Mammary epithelial cell (primary cell): ENCODE measurements at regions of chr9 and their contacts with region 1.

Region 1: DNA sequence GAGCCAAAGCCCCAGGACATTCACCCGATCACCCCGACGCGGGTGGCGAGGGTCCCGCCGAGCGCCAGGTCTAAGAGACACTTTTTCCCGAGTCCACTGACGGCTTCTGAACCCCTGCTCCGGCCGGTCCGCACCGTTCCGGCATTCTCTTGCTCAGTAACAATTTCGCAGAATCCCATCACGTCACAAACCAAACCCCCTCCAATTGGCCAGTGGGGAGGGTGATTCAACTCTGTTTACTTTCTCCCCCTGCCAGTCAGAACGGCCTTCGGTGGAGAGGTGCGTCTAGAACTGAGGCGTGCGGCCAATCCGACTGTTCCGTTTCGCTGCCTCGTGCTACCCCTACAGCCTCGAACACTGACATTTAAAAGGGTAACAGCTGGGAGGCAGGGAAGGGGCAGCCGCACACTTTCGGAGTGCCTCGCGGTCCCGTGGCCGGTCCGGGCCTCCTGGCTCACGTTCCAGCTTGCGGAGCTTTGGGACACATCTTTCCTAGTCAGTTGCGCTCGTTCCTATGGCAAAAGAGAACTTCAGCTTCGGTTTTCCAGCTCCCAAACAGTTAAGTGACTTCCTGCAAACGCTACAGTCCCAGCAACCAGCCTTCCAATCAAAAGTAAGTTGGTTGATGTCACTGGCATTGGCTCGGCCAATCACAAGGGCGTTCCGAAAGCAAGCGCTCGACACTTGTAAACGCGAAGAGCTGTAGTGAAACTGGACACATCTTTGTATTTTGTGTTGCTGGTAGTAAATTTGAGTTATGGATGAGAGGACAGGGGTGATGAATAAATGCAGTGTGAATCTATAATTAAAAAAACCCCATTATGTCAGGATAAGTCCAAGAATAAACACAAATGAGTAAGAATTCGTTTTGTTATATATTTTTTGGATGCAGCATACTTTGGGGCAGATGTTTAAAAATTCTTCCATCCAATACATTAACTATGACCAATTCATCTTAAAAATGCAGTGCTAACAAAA is at the start of gene KLF9:
- DNase-seq: peak; percentile 97
- H3K4me3 ChIP-seq: peak within 1 kb of the TSS; percentile 53 to 94 (median 78)
- H3K27ac ChIP-seq: peak within 1 kb of the TSS; percentile 89
- H3K4me1 ChIP-seq: peaks cover 29% of the 10 kb centered on the region
- H3K27me3 ChIP-seq: no peaks in the 10 kb centered on the region
- CTCF ChIP-seq: no peak
- total RNA-seq, gene KLF9: 5.5 to 10.8 TPM

Region 2: DNA sequence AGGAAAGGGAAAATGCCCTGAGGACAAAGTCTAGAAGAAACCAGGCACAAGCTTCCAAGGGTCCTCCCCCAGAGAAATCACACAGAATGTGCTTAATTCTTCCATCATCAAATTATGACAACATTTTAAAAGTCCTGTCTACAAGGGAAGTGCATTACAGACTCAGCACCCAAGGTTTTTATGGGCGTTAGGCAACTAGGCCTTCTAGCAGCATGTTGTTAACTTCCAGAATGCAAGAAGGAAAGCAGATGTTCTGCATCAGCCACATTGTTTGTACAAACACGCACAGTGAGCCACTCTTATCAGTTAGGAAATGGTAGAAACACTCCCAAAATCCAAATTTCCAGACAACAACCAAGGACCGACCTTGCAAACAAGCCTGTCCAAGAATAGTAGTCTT is 128.8 kb before region 1 on chr9:
- CTCF ChIA-PET with region 1: no interaction called
- dilution Hi-C with region 1: no loop called
- in situ Hi-C with region 1: no loop called
- intact Hi-C with region 1: loop called (anchors 10 kb)
- DNase-seq: no peak
- H3K4me3 ChIP-seq: no peak overlapping the region
- H3K27ac ChIP-seq: no peak overlapping the region
- H3K4me1 ChIP-seq: no peaks in the 10 kb centered on the region
- H3K27me3 ChIP-seq: no peaks in the 10 kb centered on the region
- CTCF ChIP-seq: no peak

Region 3: GRCh38 chr9:70362952-70363351 is 51.1 kb before region 1 on chr9:
- CTCF ChIA-PET with region 1: no interaction called
- dilution Hi-C with region 1: no loop called
- in situ Hi-C with region 1: no loop called
- intact Hi-C with region 1: no loop called
- DNase-seq: peak; percentile 17
- H3K4me3 ChIP-seq: no peak overlapping the region
- H3K27ac ChIP-seq: no peak overlapping the region
- H3K4me1 ChIP-seq: no peaks in the 10 kb centered on the region
- H3K27me3 ChIP-seq: no peaks in the 10 kb centered on the region
- CTCF ChIP-seq: no peak

Region 4: GRCh38 chr9:70484210-70485130 is 70.4 kb after region 1 on chr9:
- CTCF ChIA-PET with region 1: interaction called, 4 read pairs
- dilution Hi-C with region 1: no loop called
- in situ Hi-C with region 1: no loop called
- intact Hi-C with region 1: loop called (anchors 1 kb)
- DNase-seq: peak; percentile 82
- H3K4me3 ChIP-seq: no peak overlapping the region
- H3K27ac ChIP-seq: peak overlapping the region; percentile 44
- H3K4me1 ChIP-seq: peaks cover 32% of the 10 kb centered on the region
- H3K27me3 ChIP-seq: no peaks in the 10 kb centered on the region
- CTCF ChIP-seq: peak; percentile 65 to 71

Region 5: GRCh38 chr9:70835323-70835722 is 421.2 kb after region 1 on chr9:
- CTCF ChIA-PET with region 1: no interaction called
- dilution Hi-C with region 1: no loop called
- in situ Hi-C with region 1: no loop called
- intact Hi-C with region 1: loop called (anchors 10 kb)
- DNase-seq: peak; percentile 75
- H3K4me3 ChIP-seq: no peak overlapping the region
- H3K27ac ChIP-seq: no peak overlapping the region
- H3K4me1 ChIP-seq: no peaks in the 10 kb centered on the region
- H3K27me3 ChIP-seq: peaks cover 1% of the 10 kb centered on the region
- CTCF ChIP-seq: no peak